Right ventricle myocardium inferior (tissue), 1 donor: ENCODE measurements at regions of chr4 and their contacts with region 1.

Region 1: DNA sequence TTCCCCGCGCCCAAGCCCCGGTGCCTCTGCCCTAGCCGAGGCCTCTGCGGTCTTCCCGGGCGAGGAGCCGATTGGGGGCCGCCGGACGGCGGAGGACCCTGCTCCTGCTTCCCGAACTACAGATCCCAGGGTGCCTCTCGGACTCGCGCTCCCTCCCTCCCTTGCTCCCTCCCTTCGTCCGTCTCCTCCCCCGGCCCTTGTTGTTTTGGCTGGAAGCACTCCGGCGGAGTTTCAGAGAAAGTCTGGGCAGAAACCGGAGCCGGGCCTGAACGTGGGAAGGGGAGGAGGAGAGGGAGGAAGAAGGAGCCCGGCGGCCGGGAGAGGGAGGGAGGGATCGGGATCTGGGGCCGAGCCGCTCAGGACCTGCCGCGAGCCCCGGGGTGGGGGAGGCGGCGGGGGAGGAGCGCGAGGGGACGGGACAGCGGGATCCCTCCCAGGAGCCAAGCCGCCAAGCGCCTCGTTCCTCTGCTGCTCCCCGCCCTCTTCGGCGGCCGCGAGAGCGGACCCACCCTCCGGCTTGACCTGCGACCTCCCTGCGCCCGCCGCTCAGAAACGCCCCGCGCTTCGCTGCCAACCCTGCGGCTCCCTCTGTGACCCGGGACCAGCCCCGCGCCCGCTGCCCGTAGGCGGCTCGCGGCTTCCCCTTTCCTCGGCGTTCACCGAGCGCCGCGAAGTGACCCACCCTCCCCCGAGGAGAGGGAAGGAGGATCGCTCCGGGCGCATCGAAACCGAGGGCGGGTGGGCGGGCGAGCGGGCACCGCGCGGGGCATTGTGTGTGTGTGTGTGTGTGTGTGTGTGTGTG is 496 bp upstream of the GAB1 start:
- DNase-seq: peak; percentile 94
- ATAC-seq: peak; percentile 94

Region 2: GRCh38 chr4:143207557-143207956 is 128.6 kb before region 1 on chr4:
- intact Hi-C with region 1: loop called (anchors 2 kb)
- DNase-seq: no peak
- ATAC-seq: peak; percentile 60

Region 3: GRCh38 chr4:143294310-143294709 is 41.9 kb before region 1 on chr4:
- intact Hi-C with region 1: loop called (anchors 5 kb)
- DNase-seq: peak; percentile 90
- ATAC-seq: peak; percentile 92

Region 4: GRCh38 chr4:143399113-143399949 is 63.2 kb after region 1 on chr4:
- intact Hi-C with region 1: loop called (anchors 5 kb)
- DNase-seq: no peak
- ATAC-seq: no peak

Region 5: GRCh38 chr4:143482840-143483239 is 146.7 kb after region 1 on chr4:
- intact Hi-C with region 1: loop called (anchors 5 kb)
- DNase-seq: no peak
- ATAC-seq: peak; percentile 42

Region 6: DNA sequence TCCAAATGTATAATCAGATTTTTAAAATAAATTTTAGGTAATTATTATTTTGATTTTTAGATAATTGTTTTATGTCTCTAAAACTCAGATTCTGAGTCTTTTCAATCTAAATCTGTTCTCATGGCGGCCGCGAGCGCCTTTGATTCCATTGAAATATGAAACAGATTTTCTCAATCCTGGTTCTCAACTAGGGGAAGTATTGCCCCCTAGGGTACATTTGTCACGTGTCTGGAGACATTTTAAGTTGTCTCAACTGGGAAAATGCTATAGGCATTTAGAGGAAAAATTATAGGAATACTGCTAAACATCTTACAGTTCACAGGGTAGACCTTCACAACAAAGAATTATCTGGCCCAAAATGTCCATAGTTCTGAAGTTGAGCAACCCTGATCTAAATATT is 938.9 kb after region 1 on chr4:
- intact Hi-C with region 1: no loop called
- DNase-seq: no peak
- ATAC-seq: no peak